ENCODE measurements at regions of chr5 and their contacts with region 1.

Region 1: GRCh38 chr5:136137497-136138220 is 5.0 kb downstream of the SMAD5 start:
- DNase-seq: no peak
- CTCF ChIP-seq: no peak

Region 2: DNA sequence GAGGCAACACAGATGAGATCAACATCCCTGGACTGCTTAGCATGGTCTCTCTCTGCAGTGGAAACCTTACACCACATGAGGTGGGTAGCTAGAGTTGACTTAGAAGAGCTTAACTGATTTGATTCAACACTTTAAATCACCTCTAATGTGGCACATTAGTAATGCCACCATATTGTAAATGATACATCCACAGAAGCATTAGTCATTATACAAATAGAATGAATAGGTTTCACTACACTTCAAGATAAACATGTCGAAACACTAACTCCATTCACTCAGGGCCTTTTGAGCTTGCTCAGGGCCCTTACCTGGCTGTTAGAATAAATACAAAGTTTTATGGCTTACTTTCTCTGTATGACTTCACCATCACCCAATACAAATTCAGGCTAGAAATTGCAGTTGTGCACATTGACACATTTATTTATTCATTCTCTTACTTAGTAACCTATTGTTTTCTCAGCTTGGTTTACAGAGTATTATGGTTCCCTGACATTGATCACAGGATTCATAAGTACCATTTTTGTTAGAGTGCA is 14.4 kb before region 1 on chr5:
- CTCF ChIA-PET with region 1: interaction called, 13 read pairs
- POLR2A ChIA-PET with region 1: no interaction called
- DNase-seq: no peak
- CTCF ChIP-seq: no peak

Region 3: DNA sequence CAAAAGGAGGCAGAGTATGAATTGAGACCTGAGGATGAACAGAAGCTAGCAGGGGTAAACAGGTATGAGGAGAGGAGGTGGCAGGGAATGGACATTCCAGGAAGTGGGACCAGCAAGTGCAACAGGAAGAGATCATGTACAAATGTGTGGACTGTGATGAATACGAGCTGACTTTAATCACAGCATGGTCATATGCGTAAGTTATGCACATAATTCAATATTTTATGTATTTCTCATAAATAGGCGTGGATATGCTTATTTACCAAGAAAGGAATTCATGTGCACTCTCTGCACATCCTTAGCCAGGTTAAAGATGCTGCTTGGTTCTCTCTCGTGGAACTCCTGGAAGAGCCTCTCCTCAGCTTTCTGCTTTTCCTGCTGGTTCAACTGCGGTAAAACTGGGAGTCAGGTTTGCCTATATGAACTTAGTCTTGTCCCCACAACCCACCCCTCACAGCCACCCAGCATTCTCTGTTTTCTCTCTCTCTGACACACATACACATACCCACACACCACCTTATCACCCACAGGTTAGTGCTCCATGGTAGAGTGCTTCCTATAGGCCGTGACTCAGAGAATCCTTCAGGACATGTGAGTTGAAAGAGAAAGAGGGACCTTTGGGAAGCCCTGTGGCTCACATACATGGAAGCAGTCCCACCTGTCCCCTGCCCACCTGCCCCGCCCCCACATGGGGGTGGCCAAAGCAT is 192.0 kb after region 1 on chr5:
- CTCF ChIA-PET with region 1: no interaction called
- POLR2A ChIA-PET with region 1: no interaction called
- DNase-seq: no peak
- CTCF ChIP-seq: no peak